ENCODE measurements at regions of chr20 and their contacts with region 1.

Region 1: GRCh38 chr20:45771182-45771759 is 20.4 kb downstream of the WFDC3 start:
- DNase-seq: peak; percentile 76
- CTCF ChIP-seq: peak; percentile 93

Region 2: DNA sequence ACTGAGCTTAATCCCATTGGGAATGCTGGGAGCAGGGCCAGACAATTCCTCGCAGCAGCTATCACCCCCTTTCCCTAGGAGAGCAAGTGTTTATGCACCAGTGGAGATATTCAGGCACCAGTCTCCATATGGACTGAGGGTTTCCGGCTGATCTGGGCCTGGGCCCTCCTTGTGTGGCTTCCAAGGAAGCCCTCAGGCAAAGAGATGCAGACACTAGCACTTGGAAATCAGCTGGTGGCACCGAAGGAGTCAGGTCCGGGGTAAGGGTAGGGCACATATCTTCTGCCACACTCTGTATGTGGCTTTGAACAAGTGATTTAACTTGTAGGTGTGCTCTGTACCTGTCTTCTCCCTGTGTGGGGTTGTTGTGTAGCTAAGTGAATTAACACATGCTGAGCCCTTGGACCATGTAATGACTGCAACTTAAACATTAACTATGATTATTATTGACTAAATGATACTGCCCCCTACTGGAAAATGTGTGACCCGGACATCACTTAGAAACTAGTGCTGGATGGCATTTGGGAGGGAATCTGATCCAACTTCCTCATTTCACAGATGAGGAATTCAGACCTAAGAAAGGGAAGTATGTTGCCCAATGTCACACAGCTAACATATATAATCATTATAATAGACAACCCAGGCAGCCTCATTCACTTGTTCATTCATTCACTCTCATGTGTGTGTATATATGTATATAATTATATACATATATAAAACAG is 321.0 kb before region 1 on chr20:
- in situ Hi-C with region 1: loop called (anchors 25 kb)
- DNase-seq: peak; percentile 43
- CTCF ChIP-seq: peak; percentile 64

Region 3: DNA sequence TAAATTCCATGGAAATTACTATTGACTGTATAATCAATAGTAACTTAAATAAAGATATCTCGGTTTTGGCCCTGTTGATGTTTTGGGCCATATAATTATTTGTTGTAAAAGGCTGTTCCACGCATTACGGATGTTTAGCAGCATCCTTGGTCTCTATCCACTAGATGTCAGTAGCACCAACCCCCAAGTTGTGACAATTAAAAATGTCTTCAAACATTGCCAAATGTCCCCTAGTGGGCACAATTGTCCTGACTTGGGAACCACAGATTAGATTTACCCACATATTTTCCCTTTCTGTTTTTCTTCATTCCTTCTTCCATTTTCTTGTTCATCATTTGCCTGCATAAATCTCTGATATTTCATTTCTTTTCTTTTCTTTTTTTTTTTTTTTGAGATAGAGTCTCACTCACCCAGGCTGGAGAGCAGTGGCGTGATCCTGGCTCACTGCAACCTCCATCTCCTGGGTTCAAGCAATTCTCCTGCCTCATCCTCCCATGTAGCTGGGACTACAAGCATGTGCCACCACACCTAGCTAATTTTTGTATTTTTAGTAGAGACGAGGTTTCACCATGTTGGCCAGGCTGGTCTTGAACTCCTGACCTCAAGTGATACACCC is 178.6 kb before region 1 on chr20:
- in situ Hi-C with region 1: loop called (anchors 25 kb)
- DNase-seq: peak; percentile 37
- CTCF ChIP-seq: peak; percentile 74

Region 4: DNA sequence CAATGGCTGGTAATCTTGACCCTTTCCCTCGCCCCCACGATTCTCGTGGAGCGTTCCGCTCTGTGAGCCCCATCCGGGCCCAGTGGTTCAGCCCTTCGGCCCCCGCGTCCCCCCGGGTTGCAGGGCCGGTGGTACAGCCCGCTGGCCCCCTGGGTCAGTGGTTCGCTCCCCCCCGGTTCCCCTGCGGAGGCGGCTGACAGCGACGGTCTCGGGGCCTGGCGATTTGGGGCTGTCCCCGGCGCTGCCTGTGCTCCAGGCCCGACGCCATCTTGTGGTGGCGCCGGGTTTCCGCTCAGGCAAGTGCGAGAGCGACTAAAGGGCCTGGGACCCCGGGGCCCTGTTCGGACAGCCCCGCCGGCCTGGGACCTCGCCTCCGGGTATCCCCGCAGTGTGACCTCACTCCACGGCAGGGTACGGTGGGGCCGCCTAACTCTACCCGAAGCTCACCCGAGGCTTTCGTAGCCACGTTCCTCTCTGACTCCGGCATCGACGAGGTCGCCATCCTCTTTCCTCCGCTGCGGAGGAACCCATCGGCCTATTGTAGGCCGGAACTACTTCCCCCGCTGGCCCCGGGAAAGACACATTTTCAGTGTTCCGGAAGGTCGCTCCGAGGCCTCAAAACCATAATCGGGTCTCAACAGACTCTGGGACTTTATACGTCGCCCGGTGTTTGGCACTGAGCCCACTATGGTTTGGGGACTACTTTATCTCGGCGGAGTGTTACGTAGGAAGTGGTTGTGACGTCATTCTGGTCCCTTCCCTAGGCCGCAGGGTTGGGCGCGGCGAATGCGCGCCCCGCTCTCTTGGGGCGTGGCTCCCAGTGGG is 200.6 kb after region 1 on chr20 and contains the start of gene ZNF335:
- in situ Hi-C with region 1: no loop called
- DNase-seq: peak; percentile 99
- CTCF ChIP-seq: no peak

Measured in GM13977 (cell line).